HEK293 (cell line): ENCODE measurements at regions of chr3 and their contacts with region 1.

Region 1: DNA sequence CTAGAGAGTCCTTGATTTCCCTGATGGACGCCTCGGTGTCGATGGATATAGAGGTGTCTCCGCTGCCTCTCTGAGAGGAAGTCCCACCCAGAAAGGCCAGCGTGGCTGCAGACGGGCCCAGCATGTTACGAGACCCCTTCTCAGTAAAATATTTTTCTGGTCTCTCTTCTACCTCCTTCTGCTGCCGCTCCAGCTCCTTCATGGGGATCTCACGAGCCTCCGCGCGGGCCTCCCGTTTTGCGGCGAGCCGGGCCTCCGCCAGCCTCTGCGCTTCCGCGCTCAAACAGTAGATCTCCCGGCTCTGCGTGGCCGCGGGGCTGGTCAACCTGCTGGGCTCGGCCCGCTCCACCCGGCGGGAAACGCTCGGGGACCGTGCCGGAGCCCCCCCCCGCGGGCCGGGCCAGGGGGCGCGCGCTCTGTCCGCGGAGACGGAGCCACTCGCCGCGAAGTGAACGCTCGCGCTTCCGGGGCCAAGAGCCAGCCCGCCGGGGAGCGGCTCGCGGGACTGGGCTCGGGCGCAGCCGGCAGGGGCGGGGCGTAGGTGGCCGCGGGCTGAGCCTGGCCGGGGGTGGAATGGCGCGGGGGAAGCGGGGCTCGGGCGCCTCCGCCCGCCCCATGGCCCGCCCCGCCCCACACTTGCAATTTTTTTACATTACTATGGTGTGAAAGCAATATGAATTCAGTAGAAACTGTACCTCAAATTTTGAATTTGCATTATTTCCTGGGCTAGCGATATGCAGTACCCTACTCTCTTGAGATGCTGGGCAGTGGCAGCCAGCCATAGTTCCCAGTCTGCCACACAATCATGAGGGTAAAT is 10.2 kb upstream of the KCNMB3 start:
- H3K4me3 ChIP-seq: peak overlapping the region; percentile 44
- H3K27ac ChIP-seq: no peak overlapping the region
- H3K4me1 ChIP-seq: no peaks in the 10 kb centered on the region
- CTCF ChIP-seq: no peak

Region 2: GRCh38 chr3:178480795-178481194 is 780.4 kb before region 1 on chr3:
- CTCF ChIA-PET with region 1: no interaction called
- POLR2A ChIA-PET with region 1: no interaction called
- H3K4me3 ChIP-seq: no peak overlapping the region
- H3K27ac ChIP-seq: no peak overlapping the region
- H3K4me1 ChIP-seq: no peaks in the 10 kb centered on the region
- CTCF ChIP-seq: no peak

Region 3: DNA sequence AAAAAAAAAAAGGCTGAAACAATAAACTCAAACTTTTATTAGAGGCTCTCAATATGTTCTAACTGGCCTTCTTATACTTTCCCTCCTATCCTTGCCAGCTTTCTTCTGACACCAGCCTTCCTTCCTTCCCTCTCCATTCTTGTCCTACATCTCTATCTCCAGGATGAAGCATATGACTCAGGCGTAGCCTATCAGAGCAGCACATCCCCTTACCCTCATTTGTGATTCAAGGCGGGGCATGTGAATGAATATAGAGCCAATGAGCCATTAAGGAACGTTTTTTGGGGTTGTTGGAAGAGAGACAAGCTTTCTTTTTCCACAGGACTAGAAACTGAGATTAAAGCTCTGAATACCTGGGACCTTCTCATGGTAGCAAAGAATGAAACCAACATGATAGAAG is 14.8 kb after region 1 on chr3:
- CTCF ChIA-PET with region 1: no interaction called
- POLR2A ChIA-PET with region 1: interaction called, 10 read pairs
- H3K4me3 ChIP-seq: no peak overlapping the region
- H3K27ac ChIP-seq: no peak overlapping the region
- H3K4me1 ChIP-seq: no peaks in the 10 kb centered on the region
- CTCF ChIP-seq: no peak